ENCODE measurements at regions of chr3 and their contacts with region 1.

Region 1: GRCh38 chr3:142863010-142863715 is 25.7 kb downstream of the PCOLCE2 start:
- DNase-seq: no peak
- H3K4me3 ChIP-seq: no peak overlapping the region
- H3K27ac ChIP-seq: no peak overlapping the region
- H3K27me3 ChIP-seq: peaks cover 4% of the 10 kb centered on the region
- CTCF ChIP-seq: no peak

Region 2: GRCh38 chr3:142787719-142788118 is 75.4 kb before region 1 on chr3:
- CTCF ChIA-PET with region 1: no interaction called
- POLR2A ChIA-PET with region 1: interaction called, 13 read pairs
- DNase-seq: no peak
- H3K4me3 ChIP-seq: no peak overlapping the region
- H3K27ac ChIP-seq: no peak overlapping the region
- H3K27me3 ChIP-seq: no peaks in the 10 kb centered on the region
- CTCF ChIP-seq: no peak

Region 3: GRCh38 chr3:142875583-142876207 is 12.5 kb after region 1 on chr3:
- CTCF ChIA-PET with region 1: no interaction called
- POLR2A ChIA-PET with region 1: no interaction called
- DNase-seq: no peak
- H3K4me3 ChIP-seq: no peak overlapping the region
- H3K27ac ChIP-seq: no peak overlapping the region
- H3K27me3 ChIP-seq: no peaks in the 10 kb centered on the region
- CTCF ChIP-seq: no peak